Cardiac septum (tissue), 1 donor: ENCODE measurements at regions of chr9 and their contacts with region 1.

Region 1: GRCh38 chr9:81521892-81522291 is 167.5 kb downstream of the TLE1 start:
- DNase-seq: no peak

Region 2: GRCh38 chr9:81150016-81150625 is 371.8 kb before region 1 on chr9:
- intact Hi-C with region 1: no loop called
- DNase-seq: no peak

Region 3: DNA sequence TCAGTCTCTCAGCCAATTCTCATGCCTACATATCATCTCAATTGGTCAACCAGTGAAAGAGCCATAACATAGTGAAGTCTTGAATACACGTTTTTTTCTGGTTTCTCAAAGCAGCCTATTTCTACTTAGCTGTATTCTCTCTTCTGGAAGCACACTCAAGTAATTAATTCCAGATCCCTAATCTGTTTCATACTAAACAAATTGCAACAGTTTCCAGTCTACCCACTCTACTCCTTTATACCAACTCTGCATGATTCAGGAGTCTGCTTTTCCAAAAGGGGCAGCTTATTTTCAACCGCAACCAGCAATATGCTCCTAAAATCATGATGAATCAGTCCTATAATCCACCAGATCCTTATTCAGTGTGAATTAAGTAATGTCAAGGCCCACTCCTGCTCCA is 44.2 kb before region 1 on chr9:
- intact Hi-C with region 1: no loop called
- DNase-seq: no peak

Region 4: DNA sequence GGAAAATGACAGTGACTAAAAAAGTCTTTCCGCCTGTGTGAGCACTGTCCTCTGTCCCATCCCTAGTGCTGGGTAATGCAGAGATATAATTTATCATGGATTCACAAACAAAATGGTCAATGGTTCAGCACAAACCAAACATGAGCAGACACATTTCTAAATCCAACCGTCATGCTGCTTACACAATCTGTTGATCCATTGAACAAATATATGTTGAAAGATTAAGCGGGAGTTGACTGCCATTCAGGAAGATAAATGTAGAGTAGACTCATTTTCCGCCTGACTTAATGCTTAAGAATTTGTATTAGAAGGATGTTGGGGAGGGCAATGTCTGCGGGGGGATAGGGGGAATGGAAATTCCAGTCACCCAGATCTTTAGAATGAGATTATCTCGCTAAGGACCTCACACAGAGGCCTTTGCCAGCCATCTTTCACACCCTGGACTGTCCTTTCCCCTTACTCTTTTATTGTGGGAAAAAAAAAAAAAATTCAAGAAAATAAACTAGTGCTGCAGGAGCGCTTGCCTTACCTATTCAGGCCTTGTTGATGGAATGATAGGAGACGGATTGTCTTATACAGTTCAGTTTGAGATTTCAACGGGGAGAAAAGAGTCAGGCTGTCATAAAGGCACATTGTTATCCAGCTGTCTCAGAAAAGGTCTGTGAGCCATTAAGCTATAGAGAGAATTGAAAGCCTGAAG is 13.8 kb after region 1 on chr9:
- intact Hi-C with region 1: no loop called
- DNase-seq: no peak

Region 5: GRCh38 chr9:81848472-81848871 is 326.6 kb after region 1 on chr9:
- intact Hi-C with region 1: loop called (anchors 5 kb)
- DNase-seq: no peak

Region 6: DNA sequence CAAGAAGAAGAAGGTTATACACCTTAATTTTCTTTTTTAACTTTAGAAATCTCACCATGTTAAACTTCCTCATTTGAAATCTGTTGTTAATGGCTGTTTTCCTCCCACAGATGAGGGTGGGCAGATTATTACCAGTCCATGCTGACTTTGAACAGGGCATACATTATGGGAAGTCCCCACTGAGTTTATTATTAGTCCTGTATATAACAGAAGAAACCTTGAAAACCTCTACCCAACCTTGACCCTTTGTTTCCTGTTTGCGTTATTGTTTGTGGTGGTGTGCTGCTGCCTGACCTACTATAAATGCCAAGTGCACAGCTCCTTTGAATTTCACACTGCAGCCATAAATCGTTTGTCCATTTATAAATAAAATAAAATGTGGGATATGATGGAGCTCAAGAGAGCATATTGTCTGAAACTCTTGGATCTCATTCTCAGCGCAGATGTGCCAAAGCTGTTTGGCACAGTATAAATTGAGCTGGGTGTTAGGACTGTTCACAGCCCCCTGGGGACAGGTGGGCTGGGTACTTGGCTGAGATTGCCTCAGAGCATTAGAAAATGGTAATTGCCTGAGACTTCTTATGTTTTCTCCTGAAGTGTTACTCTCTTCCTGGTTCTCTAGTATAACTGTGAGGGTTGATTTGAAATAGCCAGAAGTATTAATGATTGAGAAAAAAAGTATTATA is 606.3 kb after region 1 on chr9:
- intact Hi-C with region 1: no loop called
- DNase-seq: no peak